HCT116 (cell line): ENCODE measurements at regions of chr3 and their contacts with region 1.

Region 1: GRCh38 chr3:111717601-111718000 is 122.5 kb upstream of the ZBED2 start:
- DNase-seq: peak; percentile 81
- ATAC-seq: peak; percentile 93
- H3K4me3 ChIP-seq: no peak overlapping the region
- H3K27ac ChIP-seq: peak overlapping the region; percentile 47
- H3K4me1 ChIP-seq: peaks cover 21 to 52% of the 10 kb centered on the region in 2 experiments
- H3K27me3 ChIP-seq: no peaks in the 10 kb centered on the region
- CTCF ChIP-seq: peak; percentile 84 to 96 (median 95)
- POLR2A ChIP-seq: no peak
- RAD21 ChIP-seq: peak; percentile 100

Region 2: GRCh38 chr3:111577794-111578685 is 139.6 kb before region 1 on chr3:
- CTCF ChIA-PET with region 1: interaction called, 34 read pairs
- POLR2A ChIA-PET with region 1: no interaction called
- RAD21 ChIA-PET with region 1: interaction called in 1 of 2 experiments, 4 read pairs
- intact Hi-C with region 1: loop called (anchors 5 kb)
- DNase-seq: peak; percentile 69
- ATAC-seq: peak; percentile 83
- H3K4me3 ChIP-seq: no peak overlapping the region
- H3K27ac ChIP-seq: peak overlapping the region; percentile 7; the same call in 1 of the 2 replicates
- H3K4me1 ChIP-seq: peaks cover 30 to 64% of the 10 kb centered on the region in 2 experiments
- H3K27me3 ChIP-seq: no peaks in the 10 kb centered on the region
- CTCF ChIP-seq: peak; percentile 60 to 79 (median 77)
- POLR2A ChIP-seq: no peak
- RAD21 ChIP-seq: peak; percentile 92

Region 3: GRCh38 chr3:111668912-111669488 is 48.6 kb before region 1 on chr3:
- CTCF ChIA-PET with region 1: interaction called, 53 read pairs
- POLR2A ChIA-PET with region 1: no interaction called
- RAD21 ChIA-PET with region 1: interaction called in 1 of 2 experiments, 7 read pairs
- intact Hi-C with region 1: loop called (anchors 2 kb)
- DNase-seq: peak; percentile 47
- ATAC-seq: peak; percentile 88
- H3K4me3 ChIP-seq: no peak overlapping the region
- H3K27ac ChIP-seq: no peak overlapping the region
- H3K4me1 ChIP-seq: peaks cover 14 to 46% of the 10 kb centered on the region in 2 experiments; a peak in 3 of 4 replicates
- H3K27me3 ChIP-seq: no peaks in the 10 kb centered on the region
- CTCF ChIP-seq: peak; percentile 57 to 89 (median 81)
- POLR2A ChIP-seq: no peak
- RAD21 ChIP-seq: peak; percentile 92

Region 4: DNA sequence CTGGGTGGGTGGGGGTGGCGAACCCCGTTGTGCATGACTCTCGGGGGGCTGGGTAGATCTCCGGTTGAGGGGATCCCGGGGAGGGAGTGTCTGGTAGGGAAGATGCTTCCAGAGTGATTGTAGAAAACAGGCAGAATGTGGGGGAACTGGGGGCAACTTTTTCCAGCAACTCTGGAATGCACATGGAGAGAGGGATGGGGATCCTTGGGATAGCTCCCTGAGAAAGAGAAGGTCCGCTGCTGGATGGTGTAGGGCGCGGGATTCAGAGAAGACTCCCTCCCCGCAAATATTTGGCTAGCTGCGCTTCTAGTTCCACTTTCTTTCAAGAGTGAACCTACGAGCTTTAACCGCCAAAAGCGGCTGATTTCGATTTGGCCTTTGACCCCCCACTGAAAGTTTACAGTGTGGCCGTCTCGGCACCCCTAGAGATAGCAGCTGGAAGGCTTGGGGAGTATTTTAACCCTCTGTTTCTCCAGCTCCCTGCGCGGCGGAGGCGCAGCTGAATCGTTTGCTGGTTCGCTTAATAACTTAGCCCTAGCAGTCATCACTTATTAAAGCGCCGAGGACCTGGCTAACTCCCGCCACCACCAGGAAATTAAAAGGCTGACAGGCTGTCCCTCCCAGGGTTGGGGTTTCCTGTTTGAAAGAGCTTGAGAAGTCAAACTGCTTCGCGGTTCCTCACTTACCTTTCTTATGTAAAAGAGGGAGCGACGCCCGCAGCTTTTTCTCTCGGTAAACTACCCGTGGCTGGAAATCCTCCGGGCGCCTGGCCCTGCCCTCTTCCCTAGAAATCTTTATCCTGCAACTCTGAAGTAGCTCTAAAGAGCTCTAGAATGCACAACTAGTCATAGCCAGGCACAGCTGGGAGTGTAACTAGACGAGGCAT is 142.6 kb after region 1 on chr3:
- CTCF ChIA-PET with region 1: interaction called, 40 read pairs
- POLR2A ChIA-PET with region 1: interaction called, 6 read pairs
- RAD21 ChIA-PET with region 1: interaction called, 5 to 9 read pairs
- intact Hi-C with region 1: loop called (anchors 1 kb)
- DNase-seq: peak; percentile 82
- ATAC-seq: peak; percentile 56
- H3K4me3 ChIP-seq: peak overlapping the region; percentile 84 to 88
- H3K27ac ChIP-seq: peak overlapping the region; percentile 96
- H3K4me1 ChIP-seq: peaks cover 56 to 80% of the 10 kb centered on the region in 2 experiments
- H3K27me3 ChIP-seq: no peaks in the 10 kb centered on the region
- CTCF ChIP-seq: peak; percentile 36 to 50 (median 39); a peak in 5 of 6 replicates
- POLR2A ChIP-seq: peak; percentile 2
- RAD21 ChIP-seq: peak; percentile 69

Region 5: DNA sequence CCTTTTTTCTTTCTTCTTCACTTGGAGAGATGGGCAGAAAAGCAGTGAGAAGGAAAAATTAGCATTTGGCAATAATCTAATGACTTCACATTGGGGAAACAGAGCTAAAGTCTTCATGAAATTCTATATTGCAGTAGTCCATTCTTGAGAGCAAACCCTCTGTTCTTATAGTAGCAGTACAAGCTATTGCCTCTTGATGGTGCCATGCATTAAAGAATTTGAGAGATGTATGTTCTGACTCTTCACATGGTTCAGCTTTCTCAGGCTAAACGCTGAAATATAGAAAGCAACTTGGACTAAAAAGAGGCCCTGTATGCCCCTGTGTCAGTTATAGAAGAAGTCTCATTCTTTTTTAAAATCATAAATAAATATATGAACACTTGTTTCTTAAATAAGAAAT is 177.5 kb after region 1 on chr3:
- CTCF ChIA-PET with region 1: interaction called, 16 read pairs
- POLR2A ChIA-PET with region 1: interaction called, 3 read pairs
- RAD21 ChIA-PET with region 1: interaction called in 1 of 2 experiments, 3 read pairs
- intact Hi-C with region 1: no loop called
- DNase-seq: peak; percentile 75
- ATAC-seq: peak; percentile 82
- H3K4me3 ChIP-seq: no peak overlapping the region
- H3K27ac ChIP-seq: peak overlapping the region; percentile 58
- H3K4me1 ChIP-seq: peaks cover 23 to 73% of the 10 kb centered on the region in 2 experiments; a peak in 3 of 4 replicates
- H3K27me3 ChIP-seq: no peaks in the 10 kb centered on the region
- CTCF ChIP-seq: peak in 2 of 3 experiments; percentile 64 to 81; a peak in 4 of 6 replicates
- POLR2A ChIP-seq: no peak
- RAD21 ChIP-seq: no peak

Region 6: DNA sequence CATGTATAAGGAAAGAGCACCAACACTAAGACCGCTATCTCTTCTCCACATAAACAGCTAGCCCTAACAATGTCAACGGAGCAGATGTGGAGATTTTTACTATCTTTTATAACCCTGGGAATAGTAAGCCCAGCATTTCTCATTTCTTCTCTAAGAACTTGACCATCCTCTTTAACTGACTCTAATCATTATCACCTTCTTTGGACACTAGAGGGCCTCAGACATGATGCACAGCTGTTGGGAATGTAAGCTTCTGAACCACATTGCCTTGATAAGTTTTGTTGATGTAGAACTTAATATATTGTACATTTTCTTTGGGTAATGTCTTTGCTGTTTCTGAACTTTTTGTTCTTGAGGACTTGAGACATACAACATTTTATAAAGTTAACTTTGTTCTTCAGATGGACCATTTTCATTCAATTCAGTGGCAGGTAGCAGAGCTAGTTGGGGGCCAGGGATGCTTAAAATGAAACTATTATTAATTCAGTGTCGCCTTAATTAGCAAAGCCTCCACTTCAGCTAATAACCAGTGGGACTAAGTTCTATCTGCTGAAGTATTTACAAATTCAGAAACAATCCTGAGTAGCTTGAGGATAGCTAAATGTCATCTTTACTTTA is 271.6 kb after region 1 on chr3:
- CTCF ChIA-PET with region 1: interaction called, 16 read pairs
- POLR2A ChIA-PET with region 1: no interaction called
- RAD21 ChIA-PET with region 1: no interaction called
- intact Hi-C with region 1: loop called (anchors 5 kb)
- DNase-seq: peak; percentile 63
- ATAC-seq: peak; percentile 87
- H3K4me3 ChIP-seq: no peak overlapping the region
- H3K27ac ChIP-seq: peak overlapping the region; percentile 20; the same call in 1 of the 2 replicates
- H3K4me1 ChIP-seq: no peaks in the 10 kb centered on the region
- H3K27me3 ChIP-seq: no peaks in the 10 kb centered on the region
- CTCF ChIP-seq: peak; percentile 76 to 94 (median 86)
- POLR2A ChIP-seq: no peak
- RAD21 ChIP-seq: peak; percentile 78

Region 7: DNA sequence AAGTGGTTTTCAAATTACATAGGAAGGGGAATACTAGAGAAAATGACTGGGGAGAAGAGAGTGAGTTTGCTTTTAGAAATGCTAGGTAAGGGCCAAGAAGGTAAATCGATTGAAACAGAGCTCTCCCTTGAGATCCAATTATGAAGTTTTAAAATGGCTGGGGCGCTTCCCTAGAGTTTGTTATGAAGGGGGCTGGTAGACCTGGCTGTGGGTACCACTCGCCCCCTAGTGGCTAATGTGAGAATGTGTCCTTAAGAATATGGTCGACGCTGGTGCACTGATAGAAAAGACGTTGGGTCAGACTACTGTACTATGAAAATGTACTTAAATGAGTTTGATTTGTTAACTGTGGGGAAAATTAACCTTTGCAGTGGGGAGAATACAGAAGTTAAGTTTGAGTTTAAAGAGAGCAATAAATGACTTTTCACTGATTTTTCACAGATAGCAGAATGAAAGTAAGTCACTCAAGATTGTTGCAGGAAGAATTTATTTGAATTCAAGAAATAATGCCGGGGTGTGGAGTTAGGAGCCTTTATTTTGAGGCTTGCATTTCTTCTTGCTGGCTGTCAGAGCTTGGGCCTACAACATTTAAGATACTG is 326.1 kb after region 1 on chr3:
- CTCF ChIA-PET with region 1: interaction called, 8 read pairs
- POLR2A ChIA-PET with region 1: no interaction called
- RAD21 ChIA-PET with region 1: no interaction called
- intact Hi-C with region 1: loop called (anchors 5 kb)
- DNase-seq: peak; percentile 75
- ATAC-seq: peak; percentile 97
- H3K4me3 ChIP-seq: peak overlapping the region; percentile 11 to 40; a peak in 3 of 4 replicates
- H3K27ac ChIP-seq: no peak overlapping the region; the same call in 1 of the 2 replicates
- H3K4me1 ChIP-seq: peaks cover 0 to 26% of the 10 kb centered on the region in 2 experiments; a peak in 2 of 4 replicates
- H3K27me3 ChIP-seq: no peaks in the 10 kb centered on the region
- CTCF ChIP-seq: peak; percentile 87 to 99 (median 96)
- POLR2A ChIP-seq: no peak
- RAD21 ChIP-seq: peak; percentile 91